PC-9 (cell line): ENCODE measurements at regions of chr16 and their contacts with region 1.

Region 1: GRCh38 chr16:81140930-81141780 is 45.0 kb upstream of the GCSH start:
- DNase-seq: peak in 1 of 2 experiments; percentile 19
- H3K4me3 ChIP-seq: no peak overlapping the region
- H3K27ac ChIP-seq: peak overlapping the region; percentile 98
- H3K4me1 ChIP-seq: peaks cover 58% of the 10 kb centered on the region
- H3K27me3 ChIP-seq: no peaks in the 10 kb centered on the region
- CTCF ChIP-seq: peak; percentile 58

Region 2: DNA sequence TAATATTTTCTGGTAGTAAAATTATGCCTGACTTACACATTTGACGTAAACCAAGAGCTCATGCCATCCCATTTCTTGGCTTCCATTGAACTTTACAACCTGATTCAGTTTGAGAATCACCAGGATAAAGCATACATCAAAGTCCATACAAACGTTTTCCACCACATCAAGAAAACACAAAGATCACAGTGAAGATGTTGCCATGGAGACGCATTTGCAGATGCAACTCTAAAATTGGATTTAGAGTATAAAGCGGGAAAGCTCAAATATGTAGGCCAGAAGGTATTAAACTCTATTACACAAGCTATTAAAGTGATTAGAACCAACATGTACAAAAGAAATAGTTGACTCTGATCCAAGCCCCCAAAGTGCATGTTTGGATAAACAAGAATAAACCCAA is 74.5 kb before region 1 on chr16:
- CTCF ChIA-PET with region 1: no interaction called
- POLR2A ChIA-PET with region 1: no interaction called
- intact Hi-C with region 1: no loop called
- DNase-seq: no peak
- H3K4me3 ChIP-seq: no peak overlapping the region
- H3K27ac ChIP-seq: no peak overlapping the region
- H3K4me1 ChIP-seq: 0 out of 2 replicates have a peak, but pooled peaks cover 4% of the 10 kb centered on the region
- H3K27me3 ChIP-seq: no peaks in the 10 kb centered on the region
- CTCF ChIP-seq: no peak

Region 3: DNA sequence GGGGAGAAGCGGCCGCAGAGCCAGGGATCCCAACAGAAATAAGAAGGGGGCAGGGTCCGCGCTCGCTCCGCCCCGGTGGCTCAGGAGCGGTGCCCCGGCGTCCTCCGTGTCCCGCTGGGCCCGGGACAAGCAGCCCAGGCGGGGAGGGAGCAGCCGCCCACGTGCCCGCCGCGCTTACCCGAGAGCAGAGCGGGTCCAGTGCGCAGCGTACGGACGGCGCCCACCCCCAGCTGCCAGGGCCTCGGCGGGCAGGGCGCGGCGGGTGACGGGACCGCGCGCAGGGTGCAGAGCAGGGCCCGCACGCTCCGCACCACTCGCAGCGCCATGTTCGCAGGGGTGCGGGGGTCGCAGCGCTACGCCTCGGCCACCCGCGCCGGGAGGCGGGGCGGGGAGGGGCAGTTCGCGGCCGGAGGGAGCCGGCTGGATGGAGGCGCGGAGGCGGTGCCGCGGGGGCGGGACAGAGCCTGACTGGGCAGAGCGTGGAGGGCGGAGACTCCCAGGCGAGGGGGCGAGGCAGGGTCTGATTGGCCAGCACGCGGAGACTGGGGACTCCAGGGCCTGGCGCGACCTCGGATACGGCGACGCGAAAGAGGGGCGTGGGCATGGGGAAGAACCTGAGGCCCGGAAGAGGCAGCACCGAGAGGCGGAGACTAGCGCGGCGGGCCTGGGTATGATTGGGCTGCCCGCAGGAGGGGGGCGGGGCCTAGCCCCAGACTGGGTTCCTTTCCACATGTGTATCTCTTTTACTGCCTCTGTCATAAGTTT is 45.0 kb before region 1 on chr16 and contains the start of gene GCSH:
- CTCF ChIA-PET with region 1: no interaction called
- POLR2A ChIA-PET with region 1: no interaction called
- intact Hi-C with region 1: loop called (anchors 1 kb)
- DNase-seq: peak; percentile 94 to 99
- H3K4me3 ChIP-seq: peak within 1 kb of the TSS; percentile 98
- H3K27ac ChIP-seq: peak within 1 kb of the TSS; percentile 77
- H3K4me1 ChIP-seq: peaks cover 29% of the 10 kb centered on the region
- H3K27me3 ChIP-seq: no peaks in the 10 kb centered on the region
- CTCF ChIP-seq: no peak
- total RNA-seq, gene GCSH: 51.7 and 71.1 TPM in 2 replicates

Region 4: DNA sequence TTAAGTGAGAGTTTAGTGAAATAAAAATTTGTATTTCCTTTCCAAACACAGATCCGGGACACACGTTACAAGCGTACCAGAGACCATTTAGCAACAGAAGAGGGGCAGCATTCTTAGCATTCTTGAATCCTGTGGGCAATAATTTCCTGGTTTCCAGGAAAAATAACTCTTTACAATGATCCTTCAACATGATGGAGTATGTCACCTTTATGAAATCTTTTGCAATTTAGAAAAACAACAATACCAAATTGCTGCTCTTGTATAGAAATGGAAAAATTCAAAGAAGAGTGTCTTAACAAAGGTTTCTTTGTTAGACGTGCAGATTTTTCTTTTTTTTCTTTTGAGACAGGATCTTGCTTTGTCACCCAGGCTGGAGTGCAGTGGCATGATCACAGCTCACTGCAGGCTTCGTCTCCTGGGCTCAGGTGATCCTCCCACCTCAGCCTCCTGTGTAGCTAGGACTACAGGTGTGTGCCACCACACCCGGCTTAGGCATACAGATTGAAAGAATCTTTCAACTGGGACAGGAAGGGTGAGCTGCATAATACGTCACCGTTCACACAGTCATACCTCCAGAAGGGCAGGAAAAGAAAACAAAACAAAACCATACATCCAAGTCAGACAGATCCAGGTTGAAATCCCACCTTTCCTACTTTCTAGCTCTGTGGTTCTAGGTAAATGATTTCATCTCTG is 34.2 kb before region 1 on chr16:
- CTCF ChIA-PET with region 1: no interaction called
- POLR2A ChIA-PET with region 1: no interaction called
- intact Hi-C with region 1: no loop called
- DNase-seq: peak in 1 of 2 experiments; percentile 74
- H3K4me3 ChIP-seq: no peak overlapping the region
- H3K27ac ChIP-seq: peak overlapping the region; percentile 8; the same call in 1 of the 2 replicates
- H3K4me1 ChIP-seq: peaks cover 20% of the 10 kb centered on the region
- H3K27me3 ChIP-seq: no peaks in the 10 kb centered on the region
- CTCF ChIP-seq: no peak

Region 5: GRCh38 chr16:81863630-81864352 is 722.6 kb after region 1 on chr16:
- CTCF ChIA-PET with region 1: interaction called, 10 read pairs
- POLR2A ChIA-PET with region 1: no interaction called
- intact Hi-C with region 1: no loop called
- DNase-seq: no peak
- H3K4me3 ChIP-seq: no peak overlapping the region
- H3K27ac ChIP-seq: no peak overlapping the region
- H3K4me1 ChIP-seq: no peaks in the 10 kb centered on the region
- H3K27me3 ChIP-seq: no peaks in the 10 kb centered on the region
- CTCF ChIP-seq: no peak